Gastrocnemius medialis (tissue), 4 donors: ENCODE measurements at regions of chr2 and their contacts with region 1.

Region 1: GRCh38 chr2:96509114-96509846 is 4.1 kb upstream of the NEURL3 start:
- DNase-seq: peak; percentile 73 to 86
- ATAC-seq: peak; percentile 82 to 91
- H3K4me3 ChIP-seq: peak overlapping the region in 1 of 4 donors; percentile 16
- H3K27ac ChIP-seq: peak overlapping the region in 3 of 4 donors; percentile 23 to 56 (median 50)
- H3K4me1 ChIP-seq: peaks cover 31 to 32% of the 10 kb centered on the region in 2 donors
- H3K27me3 ChIP-seq: no peaks in the 10 kb centered on the region
- CTCF ChIP-seq: peak; percentile 95 to 100 (median 98)
- POLR2A ChIP-seq: no peak

Region 2: GRCh38 chr2:96138179-96139145 is 370.8 kb before region 1 on chr2 and contains the start of gene ASTL:
- in situ Hi-C with region 1: loop called in 1 of 4 experiments (anchors 25 kb)
- intact Hi-C with region 1: loop called (anchors 10 kb)
- DNase-seq: no peak
- ATAC-seq: peak in 1 of 2 donors; percentile 59
- H3K4me3 ChIP-seq: no peak within 1 kb of the TSS
- H3K27ac ChIP-seq: no peak within 1 kb of the TSS
- H3K4me1 ChIP-seq: no peaks in the 10 kb centered on the region
- H3K27me3 ChIP-seq: no peaks in the 10 kb centered on the region
- CTCF ChIP-seq: peak; percentile 22 to 54 (median 37)
- POLR2A ChIP-seq: no peak
- total RNA-seq, gene ASTL: not detected

Region 3: GRCh38 chr2:96305091-96305978 is 203.9 kb before region 1 on chr2 and contains the start of gene SNRNP200:
- in situ Hi-C with region 1: loop called in 2 of 4 experiments (anchors 25 kb)
- intact Hi-C with region 1: loop called (anchors 2 kb)
- DNase-seq: peak; percentile 74 to 80
- ATAC-seq: peak; percentile 98 to 99
- H3K4me3 ChIP-seq: peak within 1 kb of the TSS; percentile 83 to 95 (median 89)
- H3K27ac ChIP-seq: peak within 1 kb of the TSS; percentile 81 to 92 (median 88)
- H3K4me1 ChIP-seq: peaks cover 17 to 18% of the 10 kb centered on the region in 2 donors
- H3K27me3 ChIP-seq: no peaks in the 10 kb centered on the region
- CTCF ChIP-seq: no peak
- POLR2A ChIP-seq: peak; percentile 61 to 80
- total RNA-seq, gene SNRNP200: 51.1 to 89.8 (median 67.4) TPM

Region 4: DNA sequence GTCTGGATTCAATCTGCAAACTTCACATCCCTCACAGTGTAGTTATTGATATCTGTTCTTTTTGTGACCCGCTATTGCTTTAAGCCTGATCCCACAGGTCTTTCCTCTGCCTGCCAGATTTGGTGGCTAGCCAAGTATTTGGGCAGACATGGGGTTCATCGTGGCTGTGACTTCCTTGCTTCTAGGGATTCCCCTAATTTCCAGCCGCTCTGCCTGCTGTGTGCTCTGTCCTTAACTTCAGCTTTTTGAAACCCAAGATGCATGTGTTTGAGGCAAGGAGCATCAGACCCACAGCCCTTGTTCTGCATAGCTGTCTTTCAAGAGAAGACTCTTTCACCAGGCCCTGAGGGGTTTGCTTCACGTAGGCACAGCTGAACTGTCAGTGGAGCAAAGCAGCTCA is 119.5 kb before region 1 on chr2:
- in situ Hi-C with region 1: no loop called
- intact Hi-C with region 1: no loop called
- DNase-seq: no peak
- ATAC-seq: no peak
- H3K4me3 ChIP-seq: no peak overlapping the region
- H3K27ac ChIP-seq: no peak overlapping the region
- H3K4me1 ChIP-seq: no peaks in the 10 kb centered on the region
- H3K27me3 ChIP-seq: no peaks in the 10 kb centered on the region
- CTCF ChIP-seq: no peak
- POLR2A ChIP-seq: no peak

Region 5: DNA sequence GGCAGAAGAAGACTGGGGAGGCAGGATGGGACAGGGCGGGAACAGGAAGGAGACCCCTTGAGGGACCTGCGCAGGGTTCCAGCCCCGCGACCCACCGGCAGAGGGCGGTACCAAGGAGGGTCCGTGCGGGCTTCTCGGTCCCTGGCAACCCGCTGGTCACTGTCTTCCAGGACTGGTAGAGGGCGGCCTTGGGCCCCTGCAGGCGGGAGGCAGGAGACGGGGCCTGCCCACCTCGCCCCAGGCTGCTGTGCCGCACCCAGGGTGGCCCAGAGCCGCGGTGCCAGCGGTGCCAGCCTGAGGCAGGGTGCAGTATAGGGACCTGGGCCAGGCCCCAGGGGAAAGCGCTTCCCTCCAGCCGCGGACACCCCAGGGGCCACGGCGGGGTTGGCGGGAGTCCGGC is 38.6 kb before region 1 on chr2:
- in situ Hi-C with region 1: no loop called
- intact Hi-C with region 1: loop called (anchors 2 kb)
- DNase-seq: no peak
- ATAC-seq: no peak
- H3K4me3 ChIP-seq: peak overlapping the region in 2 of 4 donors; percentile 23 to 38
- H3K27ac ChIP-seq: no peak overlapping the region
- H3K4me1 ChIP-seq: peaks cover 0 to 7% of the 10 kb centered on the region in 2 donors
- H3K27me3 ChIP-seq: peaks cover 0 to 15% (median 12%) of the 10 kb centered on the region in 3 donors
- CTCF ChIP-seq: peak; percentile 14 to 58 (median 48)
- POLR2A ChIP-seq: no peak